T-cell (primary cell): ENCODE measurements at regions of chr15 and their contacts with region 1.

Region 1: GRCh38 chr15:89971592-89971997 is 29.5 kb upstream of the ZNF710 start:
- DNase-seq: peak in 34 of 35 experiments; percentile 1 to 58 (median 32)
- ATAC-seq: peak; percentile 69 to 91 (median 74)
- H3K4me3 ChIP-seq: no peak overlapping the region
- H3K4me3 Mint-ChIP-seq: no peak overlapping the region
- H3K27ac ChIP-seq: no peak overlapping the region
- H3K27ac Mint-ChIP-seq: no peak overlapping the region
- H3K4me1 ChIP-seq: no peaks in the 10 kb centered on the region
- H3K4me1 Mint-ChIP-seq: no peaks in the 10 kb centered on the region
- H3K27me3 ChIP-seq: peaks cover 0 to 1% of the 10 kb centered on the region in 2 experiments
- H3K27me3 Mint-ChIP-seq: peaks cover 0 to 5% of the 10 kb centered on the region in 2 donors

Region 2: DNA sequence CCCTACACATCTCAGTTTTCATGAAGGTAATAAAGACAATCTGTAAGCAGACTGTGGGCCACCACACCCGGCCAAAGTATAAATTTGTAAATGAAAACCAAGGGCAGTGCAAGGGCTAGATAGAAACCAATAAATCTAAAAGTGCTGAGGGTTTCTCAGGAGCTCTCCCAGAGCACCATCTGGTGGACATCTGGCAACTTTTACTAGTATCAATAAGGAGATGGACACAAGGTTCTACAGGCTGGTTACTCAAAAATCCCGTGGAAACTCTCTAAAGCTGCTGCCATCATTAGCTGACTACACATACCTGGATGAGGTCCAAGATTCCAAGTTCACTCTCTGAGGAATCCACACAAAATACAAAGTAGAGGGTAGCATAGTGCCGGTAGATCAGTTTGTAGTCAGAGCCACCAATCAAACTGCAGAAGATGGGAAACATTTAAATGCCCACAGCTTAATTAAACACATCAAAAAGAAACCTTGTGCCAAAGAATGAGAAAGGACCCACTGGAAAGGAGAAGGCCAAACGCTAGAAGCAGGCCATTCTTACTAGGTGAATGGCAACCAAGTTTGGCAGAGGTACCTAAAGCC is 83.3 kb before region 1 on chr15:
- CTCF ChIA-PET with region 1: interaction called in 1 of 2 experiments, 11 read pairs
- POLR2A ChIA-PET with region 1: no interaction called
- DNase-seq: no peak
- ATAC-seq: no peak
- H3K4me3 ChIP-seq: no peak overlapping the region
- H3K4me3 Mint-ChIP-seq: no peak overlapping the region
- H3K27ac ChIP-seq: no peak overlapping the region
- H3K27ac Mint-ChIP-seq: no peak overlapping the region
- H3K4me1 ChIP-seq: peaks cover 12 to 18% of the 10 kb centered on the region in 2 experiments
- H3K4me1 Mint-ChIP-seq: peaks cover 28 to 32% (median 32%) of the 10 kb centered on the region in 3 donors
- H3K27me3 ChIP-seq: no peaks in the 10 kb centered on the region
- H3K27me3 Mint-ChIP-seq: no peaks in the 10 kb centered on the region

Region 3: DNA sequence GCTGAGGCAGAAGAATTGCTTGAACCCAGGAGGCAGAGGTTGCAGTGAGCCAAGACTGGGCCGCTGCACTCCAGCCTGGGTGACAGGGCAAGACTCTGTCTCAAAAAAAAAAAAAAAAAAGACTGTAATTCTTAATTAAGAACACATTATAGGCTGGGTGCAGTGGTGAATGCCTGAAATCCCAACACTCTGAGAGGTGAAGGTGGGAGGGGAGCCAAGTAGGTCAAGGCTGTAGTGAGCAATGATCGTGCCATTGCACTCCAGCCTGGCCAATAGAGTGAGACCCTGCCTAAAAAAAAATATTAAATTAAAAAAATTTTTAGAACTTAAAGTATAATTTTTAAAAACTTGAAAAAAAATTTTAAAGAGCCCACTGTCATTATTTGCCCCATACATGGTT is 45.4 kb before region 1 on chr15:
- CTCF ChIA-PET with region 1: no interaction called
- POLR2A ChIA-PET with region 1: no interaction called
- DNase-seq: no peak
- ATAC-seq: no peak
- H3K4me3 ChIP-seq: no peak overlapping the region
- H3K4me3 Mint-ChIP-seq: no peak overlapping the region
- H3K27ac ChIP-seq: no peak overlapping the region
- H3K27ac Mint-ChIP-seq: no peak overlapping the region
- H3K4me1 ChIP-seq: no peaks in the 10 kb centered on the region
- H3K4me1 Mint-ChIP-seq: no peaks in the 10 kb centered on the region
- H3K27me3 ChIP-seq: no peaks in the 10 kb centered on the region
- H3K27me3 Mint-ChIP-seq: no peaks in the 10 kb centered on the region

Region 4: DNA sequence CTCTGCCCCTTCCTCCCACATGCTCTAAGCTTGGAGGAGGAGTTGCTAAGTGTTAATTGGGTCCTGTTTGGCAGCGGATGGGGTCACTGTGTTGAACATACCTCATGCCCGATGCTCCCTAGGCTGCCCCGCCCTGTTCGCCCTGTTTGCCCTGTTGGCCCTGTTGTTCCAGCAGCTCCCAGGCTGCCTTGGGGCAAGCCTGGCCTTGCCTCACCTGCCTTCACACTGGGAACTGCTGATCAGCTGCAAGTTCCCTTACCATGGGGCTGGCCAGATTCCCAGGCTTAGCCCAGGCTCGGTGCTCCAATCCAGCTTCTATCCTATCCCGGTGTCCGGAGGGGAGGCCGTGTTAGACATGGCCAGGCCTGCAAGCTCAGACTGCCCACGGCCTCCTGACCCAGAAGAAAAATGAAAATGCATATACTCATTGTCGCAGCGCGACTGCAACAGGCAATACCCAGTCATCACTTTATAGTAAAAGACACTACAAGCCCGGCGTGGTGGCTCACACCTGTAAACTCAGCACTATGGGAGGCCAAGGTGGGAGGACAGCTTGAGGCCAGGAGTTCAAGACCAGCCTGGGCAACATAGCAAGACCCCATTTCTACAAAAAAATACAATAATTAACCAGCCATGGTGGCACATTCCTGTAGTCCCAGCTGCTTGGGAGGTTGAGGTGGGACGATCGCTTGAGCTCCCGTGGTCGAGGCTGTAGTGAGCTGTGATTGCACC is 13.4 kb before region 1 on chr15:
- CTCF ChIA-PET with region 1: no interaction called
- POLR2A ChIA-PET with region 1: no interaction called
- DNase-seq: no peak
- ATAC-seq: no peak
- H3K4me3 ChIP-seq: no peak overlapping the region
- H3K4me3 Mint-ChIP-seq: no peak overlapping the region
- H3K27ac ChIP-seq: no peak overlapping the region
- H3K27ac Mint-ChIP-seq: no peak overlapping the region
- H3K4me1 ChIP-seq: no peaks in the 10 kb centered on the region
- H3K4me1 Mint-ChIP-seq: no peaks in the 10 kb centered on the region
- H3K27me3 ChIP-seq: no peaks in the 10 kb centered on the region
- H3K27me3 Mint-ChIP-seq: no peaks in the 10 kb centered on the region

Region 5: DNA sequence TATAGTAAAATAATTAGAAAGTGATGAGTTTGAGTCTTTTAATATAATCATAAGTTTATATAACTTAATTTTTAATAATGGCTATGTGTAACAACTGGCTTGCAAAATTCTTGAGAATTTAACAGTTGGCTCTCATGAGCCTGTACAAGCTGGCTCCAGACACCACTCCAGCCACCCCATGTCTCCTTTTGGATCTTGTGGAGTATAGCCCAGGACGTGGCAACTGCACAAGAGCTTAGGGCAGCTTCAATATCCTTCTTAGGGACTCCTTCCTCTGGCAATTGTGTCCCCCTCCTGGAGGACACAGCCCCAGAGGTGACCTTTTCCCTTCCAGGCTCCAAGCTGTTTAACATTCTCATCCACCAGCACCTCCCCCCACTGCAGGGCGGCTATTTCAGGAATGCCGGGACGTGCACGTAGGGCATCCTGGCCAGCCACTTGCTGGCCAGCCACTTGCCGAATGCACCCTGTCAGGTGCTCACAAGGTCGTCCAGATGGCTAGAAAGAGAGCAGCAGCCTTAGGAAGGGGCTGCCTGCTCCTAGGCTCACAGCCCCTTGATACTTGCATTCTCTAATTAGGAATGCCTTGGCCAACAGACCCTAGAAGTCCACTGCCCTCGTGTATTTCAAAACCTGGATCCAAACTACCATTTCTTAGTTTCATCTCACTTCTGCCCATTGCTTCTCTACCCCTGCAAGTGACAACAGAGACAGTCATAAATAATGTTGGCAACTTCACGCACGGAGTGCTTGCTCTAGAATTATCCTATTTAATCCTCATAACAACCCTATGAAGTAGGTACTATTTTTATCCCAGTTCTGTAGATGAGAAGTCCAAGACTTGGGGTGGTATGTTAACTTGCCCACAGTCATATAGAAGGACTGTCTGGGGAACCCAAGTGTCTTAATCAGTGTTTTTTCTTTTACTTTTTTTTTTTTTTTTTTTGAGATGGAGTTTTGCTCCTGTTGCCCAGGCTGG is 155.2 kb after region 1 on chr15:
- CTCF ChIA-PET with region 1: no interaction called
- POLR2A ChIA-PET with region 1: no interaction called
- DNase-seq: no peak
- ATAC-seq: no peak
- H3K4me3 ChIP-seq: no peak overlapping the region
- H3K4me3 Mint-ChIP-seq: no peak overlapping the region
- H3K27ac ChIP-seq: no peak overlapping the region
- H3K27ac Mint-ChIP-seq: no peak overlapping the region
- H3K4me1 ChIP-seq: no peaks in the 10 kb centered on the region
- H3K4me1 Mint-ChIP-seq: no peaks in the 10 kb centered on the region
- H3K27me3 ChIP-seq: peaks cover 0 to 6% of the 10 kb centered on the region in 2 experiments
- H3K27me3 Mint-ChIP-seq: peaks cover 3 to 5% of the 10 kb centered on the region in 2 donors

Region 6: DNA sequence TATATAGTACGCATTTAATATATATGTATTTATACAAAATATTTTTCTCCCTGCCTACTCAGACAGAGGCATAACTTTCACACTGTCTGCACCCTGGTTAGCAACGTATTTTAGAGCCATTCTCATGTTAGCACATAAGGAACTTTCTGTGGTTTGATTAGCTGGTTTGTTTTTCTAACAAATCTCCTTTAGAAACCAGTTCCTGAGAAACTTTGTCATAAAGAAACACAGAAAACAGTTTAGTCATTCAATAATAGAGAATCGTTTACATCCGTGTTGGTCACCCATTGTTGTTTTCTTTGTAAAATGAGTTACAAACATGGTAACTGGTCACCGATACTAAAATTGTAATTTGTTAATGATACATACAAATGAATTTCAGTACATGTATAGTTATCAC is 287.9 kb after region 1 on chr15:
- CTCF ChIA-PET with region 1: no interaction called
- POLR2A ChIA-PET with region 1: no interaction called
- DNase-seq: no peak
- ATAC-seq: no peak
- H3K4me3 ChIP-seq: no peak overlapping the region
- H3K4me3 Mint-ChIP-seq: no peak overlapping the region
- H3K27ac ChIP-seq: no peak overlapping the region
- H3K27ac Mint-ChIP-seq: no peak overlapping the region
- H3K4me1 ChIP-seq: peaks cover 2 to 5% of the 10 kb centered on the region in 2 experiments
- H3K4me1 Mint-ChIP-seq: peaks cover 2 to 6% (median 6%) of the 10 kb centered on the region in 3 donors
- H3K27me3 ChIP-seq: peaks cover 0 to 11% of the 10 kb centered on the region in 2 experiments
- H3K27me3 Mint-ChIP-seq: peaks cover 0 to 2% of the 10 kb centered on the region in 2 donors